Spleen (tissue), 13 donors: ENCODE measurements at regions of chr14 and their contacts with region 1.

Region 1: GRCh38 chr14:89625244-89625713 is 208.2 kb upstream of the FOXN3 start:
- DNase-seq: no peak
- H3K4me3 ChIP-seq: no peak overlapping the region
- H3K27ac ChIP-seq: peak overlapping the region in 3 of 8 donors; percentile 45 to 75 (median 72)
- H3K4me1 ChIP-seq: peaks cover 0 to 42% (median 18%) of the 10 kb centered on the region in 6 donors
- H3K27me3 ChIP-seq: no peaks in the 10 kb centered on the region
- CTCF ChIP-seq: no peak
- POLR2A ChIP-seq: no peak

Region 2: GRCh38 chr14:89425931-89426330 is 199.3 kb before region 1 on chr14:
- intact Hi-C with region 1: loop called (anchors 10 kb)
- DNase-seq: no peak
- H3K4me3 ChIP-seq: no peak overlapping the region
- H3K27ac ChIP-seq: peak overlapping the region in 1 of 8 donors; percentile 9
- H3K4me1 ChIP-seq: peaks cover 16 to 89% (median 40%) of the 10 kb centered on the region in 6 donors
- H3K27me3 ChIP-seq: no peaks in the 10 kb centered on the region
- CTCF ChIP-seq: no peak
- POLR2A ChIP-seq: no peak